AG04449 (cell line): ENCODE measurements at regions of chr1 and their contacts with region 1.

Region 1: DNA sequence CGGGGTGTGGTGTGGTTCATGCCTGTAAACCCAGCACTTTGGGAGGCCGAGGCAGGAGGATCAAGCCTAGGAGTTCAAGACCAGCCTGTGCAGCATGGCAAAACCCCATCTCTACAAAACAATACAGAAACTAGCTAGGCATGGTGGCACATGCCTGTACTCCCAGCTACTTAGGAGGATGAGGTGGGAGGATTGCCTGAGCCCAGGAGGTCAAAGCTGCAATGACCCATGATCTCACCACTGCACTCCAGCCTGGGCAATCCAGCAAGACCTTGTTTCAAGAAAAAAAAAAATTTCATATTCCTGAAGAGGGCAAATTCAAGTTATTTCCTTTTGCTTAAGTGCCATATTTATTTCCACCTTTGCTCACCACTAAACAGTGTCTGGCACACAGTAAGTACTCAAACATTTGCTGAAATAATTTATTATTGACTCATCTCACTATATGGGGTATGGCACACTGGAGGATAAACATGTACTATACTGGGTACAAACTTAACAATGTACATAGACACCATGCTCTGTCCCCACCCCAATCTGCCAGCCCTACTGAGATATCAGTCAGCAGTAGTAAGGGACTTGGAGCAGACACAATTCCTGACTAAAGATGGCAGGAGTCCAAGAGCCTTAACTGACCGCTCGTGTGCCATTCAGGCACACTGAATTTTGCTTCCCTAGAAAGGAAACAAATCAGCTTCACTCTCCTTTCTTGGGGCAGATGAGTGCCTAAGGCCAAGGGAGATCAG is 15.5 kb downstream of the MEAF6 start:
- DNase-seq: no peak
- H3K4me3 ChIP-seq: no peak overlapping the region
- CTCF ChIP-seq: no peak

Region 2: GRCh38 chr1:37509181-37509580 is 10.1 kb after region 1 on chr1:
- CTCF ChIA-PET with region 1: interaction called, 96 read pairs
- POLR2A ChIA-PET with region 1: interaction called, 3 read pairs
- DNase-seq: no peak
- H3K4me3 ChIP-seq: no peak overlapping the region
- CTCF ChIP-seq: peak; percentile 6